Activated B cell treated with CpG ODN at 0.5 μM for 24 hours (primary cell): ENCODE measurements at regions of chr5 and their contacts with region 1.

Region 1: GRCh38 chr5:88690409-88691229 is 192.4 kb downstream of the MEF2C start:
- DNase-seq: peak; percentile 62
- ATAC-seq: peak; percentile 97
- H3K4me3 Mint-ChIP-seq: peak overlapping the region; percentile 81
- H3K27ac Mint-ChIP-seq: peak overlapping the region; percentile 84
- H3K4me1 Mint-ChIP-seq: peaks cover 23% of the 10 kb centered on the region
- H3K27me3 Mint-ChIP-seq: peaks cover 73% of the 10 kb centered on the region
- CTCF ChIP-seq: peak; percentile 90

Region 2: GRCh38 chr5:87412630-87413342 is 1277.8 kb before region 1 on chr5 and contains the start of gene CCNH:
- CTCF ChIA-PET with region 1: no interaction called
- POLR2A ChIA-PET with region 1: no interaction called
- intact Hi-C with region 1: loop called (anchors 2 kb)
- DNase-seq: peak; percentile 90
- ATAC-seq: peak; percentile 99
- H3K4me3 Mint-ChIP-seq: peak within 1 kb of the TSS; percentile 91
- H3K27ac Mint-ChIP-seq: peak within 1 kb of the TSS; percentile 93
- H3K4me1 Mint-ChIP-seq: peaks cover 36% of the 10 kb centered on the region
- H3K27me3 Mint-ChIP-seq: no peaks in the 10 kb centered on the region
- CTCF ChIP-seq: no peak
- total RNA-seq, gene CCNH: 69.3 and 74.8 TPM in 2 replicates

Region 3: DNA sequence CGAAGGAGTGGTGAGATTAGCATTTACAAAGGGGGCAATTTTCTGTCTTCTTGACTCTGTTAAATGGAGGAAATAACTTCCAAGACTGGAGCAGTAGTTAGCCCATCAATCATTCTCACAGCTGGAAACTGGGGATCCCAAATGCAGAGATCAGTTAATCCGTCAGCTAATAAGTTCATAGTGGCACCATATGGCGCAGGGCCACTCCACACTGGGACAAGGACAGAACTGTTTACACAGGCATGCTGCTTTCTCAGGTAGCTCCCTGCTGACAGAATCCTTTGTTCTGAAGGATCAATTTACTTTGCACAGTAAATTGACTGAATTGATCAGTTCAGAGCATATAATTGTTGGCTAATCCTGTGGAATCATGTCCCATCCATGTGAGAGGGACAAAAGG is 817.6 kb before region 1 on chr5:
- CTCF ChIA-PET with region 1: no interaction called
- POLR2A ChIA-PET with region 1: no interaction called
- intact Hi-C with region 1: no loop called
- DNase-seq: no peak
- ATAC-seq: no peak
- H3K4me3 Mint-ChIP-seq: no peak overlapping the region
- H3K27ac Mint-ChIP-seq: no peak overlapping the region
- H3K4me1 Mint-ChIP-seq: no peaks in the 10 kb centered on the region
- H3K27me3 Mint-ChIP-seq: no peaks in the 10 kb centered on the region
- CTCF ChIP-seq: no peak

Region 4: GRCh38 chr5:88140856-88141752 is 549.5 kb before region 1 on chr5:
- CTCF ChIA-PET with region 1: interaction called, 3 read pairs
- POLR2A ChIA-PET with region 1: no interaction called
- intact Hi-C with region 1: loop called (anchors 5 kb)
- DNase-seq: no peak
- ATAC-seq: peak; percentile 49
- H3K4me3 Mint-ChIP-seq: no peak overlapping the region
- H3K27ac Mint-ChIP-seq: no peak overlapping the region
- H3K4me1 Mint-ChIP-seq: peaks cover 11% of the 10 kb centered on the region
- H3K27me3 Mint-ChIP-seq: peaks cover 34% of the 10 kb centered on the region
- CTCF ChIP-seq: no peak

Region 5: GRCh38 chr5:88666761-88667495 is 23.7 kb before region 1 on chr5:
- CTCF ChIA-PET with region 1: interaction called, 19 read pairs
- POLR2A ChIA-PET with region 1: no interaction called
- intact Hi-C with region 1: loop called (anchors 2 kb)
- DNase-seq: no peak
- ATAC-seq: peak; percentile 50
- H3K4me3 Mint-ChIP-seq: peak overlapping the region; percentile 84
- H3K27ac Mint-ChIP-seq: peak overlapping the region; percentile 16
- H3K4me1 Mint-ChIP-seq: peaks cover 23% of the 10 kb centered on the region
- H3K27me3 Mint-ChIP-seq: peaks cover 80% of the 10 kb centered on the region
- CTCF ChIP-seq: no peak

Region 6: GRCh38 chr5:88713818-88714217 is 23.2 kb after region 1 on chr5:
- CTCF ChIA-PET with region 1: no interaction called
- POLR2A ChIA-PET with region 1: no interaction called
- intact Hi-C with region 1: no loop called
- DNase-seq: no peak
- ATAC-seq: no peak
- H3K4me3 Mint-ChIP-seq: no peak overlapping the region
- H3K27ac Mint-ChIP-seq: no peak overlapping the region
- H3K4me1 Mint-ChIP-seq: no peaks in the 10 kb centered on the region
- H3K27me3 Mint-ChIP-seq: no peaks in the 10 kb centered on the region
- CTCF ChIP-seq: no peak

Region 7: GRCh38 chr5:90264689-90265544 is 1574.3 kb after region 1 on chr5:
- CTCF ChIA-PET with region 1: interaction called, 9 read pairs
- POLR2A ChIA-PET with region 1: interaction called, 3 read pairs
- intact Hi-C with region 1: loop called (anchors 1 kb)
- DNase-seq: peak; percentile 28
- ATAC-seq: peak; percentile 68
- H3K4me3 Mint-ChIP-seq: peak overlapping the region; percentile 48
- H3K27ac Mint-ChIP-seq: no peak overlapping the region
- H3K4me1 Mint-ChIP-seq: peaks cover 6% of the 10 kb centered on the region
- H3K27me3 Mint-ChIP-seq: peaks cover 3% of the 10 kb centered on the region
- CTCF ChIP-seq: peak; percentile 92